ENCODE measurements at regions of chr2 and their contacts with region 1.

Region 1: GRCh38 chr2:222561817-222562645 is 93.9 kb downstream of the FARSB start:
- DNase-seq: peak; percentile 85
- H3K4me3 ChIP-seq: no peak overlapping the region
- H3K27ac ChIP-seq: no peak overlapping the region
- H3K4me1 ChIP-seq: no peaks in the 10 kb centered on the region
- H3K27me3 ChIP-seq: no peaks in the 10 kb centered on the region
- CTCF ChIP-seq: peak; percentile 84

Region 2: GRCh38 chr2:222038067-222038802 is 523.8 kb before region 1 on chr2:
- CTCF ChIA-PET with region 1: interaction called, 3 read pairs
- POLR2A ChIA-PET with region 1: no interaction called
- intact Hi-C with region 1: loop called (anchors 5 kb)
- DNase-seq: peak; percentile 83
- H3K4me3 ChIP-seq: no peak overlapping the region
- H3K27ac ChIP-seq: no peak overlapping the region
- H3K4me1 ChIP-seq: peaks cover 8% of the 10 kb centered on the region
- H3K27me3 ChIP-seq: no peaks in the 10 kb centered on the region
- CTCF ChIP-seq: peak; percentile 71

Region 3: GRCh38 chr2:222468346-222468745 is 93.7 kb before region 1 on chr2:
- CTCF ChIA-PET with region 1: no interaction called
- POLR2A ChIA-PET with region 1: no interaction called
- intact Hi-C with region 1: no loop called
- DNase-seq: no peak
- H3K4me3 ChIP-seq: no peak overlapping the region
- H3K27ac ChIP-seq: no peak overlapping the region
- H3K4me1 ChIP-seq: peaks cover 4% of the 10 kb centered on the region
- H3K27me3 ChIP-seq: no peaks in the 10 kb centered on the region
- CTCF ChIP-seq: no peak

Region 4: GRCh38 chr2:222594679-222595078 is 32.6 kb after region 1 on chr2:
- CTCF ChIA-PET with region 1: interaction called, 10 read pairs
- POLR2A ChIA-PET with region 1: no interaction called
- intact Hi-C with region 1: no loop called
- DNase-seq: no peak
- H3K4me3 ChIP-seq: no peak overlapping the region
- H3K27ac ChIP-seq: no peak overlapping the region
- H3K4me1 ChIP-seq: peaks cover 5% of the 10 kb centered on the region
- H3K27me3 ChIP-seq: no peaks in the 10 kb centered on the region
- CTCF ChIP-seq: no peak